GM10248 (cell line): ENCODE measurements at regions of chr1 and their contacts with region 1.

Region 1: GRCh38 chr1:99326215-99326949 is 62.1 kb downstream of the PLPPR4 start:
- DNase-seq: no peak
- CTCF ChIP-seq: no peak

Region 2: GRCh38 chr1:99281105-99281504 is 45.3 kb before region 1 on chr1:
- CTCF ChIA-PET with region 1: no interaction called
- POLR2A ChIA-PET with region 1: interaction called, 11 read pairs
- DNase-seq: no peak
- CTCF ChIP-seq: no peak

Region 3: DNA sequence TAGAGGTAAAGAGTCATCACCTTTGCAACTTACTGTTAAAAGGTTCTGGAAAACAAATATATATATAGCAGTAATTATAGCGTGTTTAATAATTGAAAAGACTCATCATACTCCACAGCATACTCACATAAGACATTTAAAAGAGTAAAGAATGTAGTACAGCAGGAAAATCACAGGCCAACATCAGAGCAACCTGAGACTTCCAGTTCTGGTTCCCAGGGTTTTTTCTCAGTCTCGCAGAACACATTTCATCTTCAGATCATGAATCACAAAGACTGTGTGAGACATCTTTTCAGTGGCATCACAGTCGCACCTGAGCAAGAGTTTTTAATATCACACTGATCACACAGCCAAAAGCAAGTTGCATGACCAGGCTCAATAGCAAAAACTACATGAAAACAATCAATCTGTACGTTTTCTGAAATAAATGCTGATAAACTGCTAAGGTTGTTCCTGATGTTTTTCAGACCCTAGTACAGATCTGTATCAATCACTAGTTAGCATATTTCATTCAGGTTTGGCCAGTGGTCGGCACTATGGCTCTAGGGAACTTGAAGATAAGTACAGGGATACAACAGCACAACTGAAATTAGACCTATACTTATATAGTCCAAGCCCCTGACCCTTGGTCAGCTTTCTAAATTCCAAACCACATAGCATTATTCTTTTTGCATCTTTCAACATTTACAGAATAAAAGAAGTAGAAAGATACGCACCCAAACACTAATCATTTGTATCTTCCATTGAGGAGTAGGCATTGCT is 80.5 kb after region 1 on chr1:
- CTCF ChIA-PET with region 1: no interaction called
- POLR2A ChIA-PET with region 1: no interaction called
- DNase-seq: no peak
- CTCF ChIP-seq: no peak

Region 4: GRCh38 chr1:99441299-99442095 is 115.1 kb after region 1 on chr1:
- CTCF ChIA-PET with region 1: no interaction called
- POLR2A ChIA-PET with region 1: no interaction called
- DNase-seq: no peak
- CTCF ChIP-seq: no peak